ENCODE measurements at regions of chr1 and their contacts with region 1.

Region 1: GRCh38 chr1:155063550-155064110 is at the start of gene EFNA4:
- DNase-seq: peak; percentile 75 to 88
- H3K4me3 ChIP-seq: peak within 1 kb of the TSS; percentile 64 to 65
- H3K27ac ChIP-seq: peak within 1 kb of the TSS; percentile 52 to 62
- H3K4me1 ChIP-seq: peaks cover 0 to 37% (median 28%) of the 10 kb centered on the region in 4 donors
- H3K27me3 ChIP-seq: no peaks in the 10 kb centered on the region
- CTCF ChIP-seq: no peak

Region 2: GRCh38 chr1:155084722-155085503 is 21.3 kb after region 1 on chr1:
- intact Hi-C with region 1: loop called (anchors 2 kb)
- DNase-seq: peak; percentile 95 to 96
- H3K4me3 ChIP-seq: peak overlapping the region; percentile 60 to 61
- H3K27ac ChIP-seq: peak overlapping the region; percentile 86 to 91
- H3K4me1 ChIP-seq: peaks cover 0 to 61% (median 43%) of the 10 kb centered on the region in 4 donors
- H3K27me3 ChIP-seq: peaks cover 9 to 46% of the 10 kb centered on the region in 2 donors
- CTCF ChIP-seq: peak; percentile 93 to 96

Region 3: DNA sequence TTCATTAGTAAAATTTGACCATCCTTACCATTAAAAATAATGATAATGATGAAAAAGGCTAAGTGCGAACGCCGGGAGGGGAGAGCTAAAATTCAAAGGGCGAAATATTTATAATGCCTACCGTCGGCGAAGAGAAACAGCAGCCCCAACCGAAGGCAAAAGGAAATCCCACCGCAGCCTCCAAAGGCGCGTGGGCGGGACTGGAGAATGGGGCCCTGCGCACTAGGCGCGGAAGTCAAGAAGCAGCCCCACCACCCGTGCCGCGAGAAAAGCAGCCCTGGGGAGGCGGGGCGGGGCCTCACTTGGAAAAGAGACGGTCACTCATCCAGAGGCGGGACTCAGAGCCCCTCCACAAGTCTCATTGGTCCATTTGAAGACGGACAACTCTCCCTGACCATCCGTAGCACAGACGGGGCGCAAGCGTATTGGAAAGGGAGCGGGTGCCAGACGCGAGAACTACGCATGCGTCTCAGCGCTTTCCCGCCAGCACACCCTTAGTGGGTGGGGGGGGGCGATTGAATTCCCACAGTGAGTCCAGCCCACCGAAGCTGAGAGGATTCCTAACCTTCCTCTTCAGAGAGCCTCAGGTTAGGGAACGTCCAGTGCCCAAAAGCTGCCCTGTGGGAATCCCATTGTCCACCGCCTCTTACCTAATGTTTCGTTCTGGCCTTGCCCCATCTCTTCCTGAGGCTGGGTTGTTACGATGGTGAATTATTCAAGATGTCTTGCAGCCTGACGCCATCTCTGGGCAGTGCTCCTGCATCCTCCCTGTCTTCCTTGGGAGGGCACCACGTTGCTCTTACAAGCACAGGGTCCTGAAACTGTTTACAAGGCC is 163.8 kb after region 1 on chr1:
- intact Hi-C with region 1: no loop called
- DNase-seq: peak; percentile 98 to 100
- H3K4me3 ChIP-seq: peak overlapping the region; percentile 53 to 66
- H3K27ac ChIP-seq: peak overlapping the region; percentile 80 to 84
- H3K4me1 ChIP-seq: peaks cover 0 to 49% (median 28%) of the 10 kb centered on the region in 4 donors
- H3K27me3 ChIP-seq: no peaks in the 10 kb centered on the region
- CTCF ChIP-seq: peak in 1 of 2 experiments; percentile 5

Measured in tibial artery (tissue), 4 donors.